ENCODE measurements at regions of chr1 and their contacts with region 1.

Region 1: GRCh38 chr1:119266386-119266785 is 102.2 kb upstream of the HAO2 start:
- DNase-seq: peak; percentile 70
- ATAC-seq: peak; percentile 95
- H3K4me3 ChIP-seq: no peak overlapping the region
- H3K27ac ChIP-seq: 0 out of 2 replicates have a peak overlapping the region, but pooled peaks have one; percentile 24
- H3K4me1 ChIP-seq: peaks cover 14% of the 10 kb centered on the region
- H3K27me3 ChIP-seq: no peaks in the 10 kb centered on the region
- CTCF ChIP-seq: no peak
- EP300 ChIP-seq: no peak
- POLR2A ChIP-seq: no peak
- RAD21 ChIP-seq: no peak

Region 2: DNA sequence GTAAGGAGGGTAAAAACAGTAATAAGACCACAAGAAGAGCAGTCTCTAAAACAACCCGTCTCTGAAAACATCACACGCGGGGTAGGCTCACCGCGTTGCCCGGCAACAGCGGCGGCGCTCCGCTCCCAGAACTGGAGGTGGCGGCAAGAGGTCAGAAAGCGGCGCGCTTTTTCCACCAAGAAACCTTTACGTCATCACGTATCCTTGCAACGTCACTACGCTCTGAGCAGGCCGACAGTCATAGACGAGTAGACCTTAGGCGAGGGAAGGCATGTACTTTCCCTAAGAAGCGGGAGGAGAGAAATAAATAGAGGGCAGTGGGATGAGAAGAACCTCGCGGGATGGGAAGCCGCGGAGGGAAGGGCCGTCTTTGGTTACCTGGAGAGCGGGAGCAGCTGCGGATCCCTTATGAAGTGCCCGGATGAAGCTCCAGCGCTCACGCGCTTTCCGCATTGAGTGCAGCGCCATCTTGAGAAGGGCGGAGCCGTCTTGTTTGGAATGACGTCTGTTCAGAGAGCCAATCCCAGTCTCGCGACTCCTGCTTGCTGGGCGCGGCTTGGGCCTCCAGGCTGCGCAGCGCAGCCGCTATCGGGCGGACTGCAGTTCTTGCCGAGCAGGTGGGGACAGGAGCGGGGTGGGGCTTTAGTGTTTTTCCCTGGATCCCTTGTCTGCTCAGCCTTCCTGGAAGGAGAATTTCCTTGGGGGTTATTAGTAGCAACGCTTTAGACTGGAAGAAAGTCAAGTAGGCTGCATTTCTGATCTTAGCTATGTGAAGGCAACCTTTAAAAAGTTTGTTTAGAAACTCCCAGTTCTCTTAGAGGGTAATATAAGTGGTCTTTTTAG is 126.0 kb before region 1 on chr1 and contains the start of gene WARS2:
- CTCF ChIA-PET with region 1: interaction called, 7 read pairs
- POLR2A ChIA-PET with region 1: no interaction called
- RAD21 ChIA-PET with region 1: interaction called, 8 read pairs
- SMC1A ChIA-PET with region 1: interaction called, 4 read pairs
- in situ Hi-C with region 1: no loop called
- intact Hi-C with region 1: loop called (anchors 10 kb)
- DNase-seq: peak; percentile 93
- ATAC-seq: peak; percentile 96
- H3K4me3 ChIP-seq: peak within 1 kb of the TSS; percentile 74
- H3K27ac ChIP-seq: peak within 1 kb of the TSS; percentile 99
- H3K4me1 ChIP-seq: no peaks in the 10 kb centered on the region
- H3K27me3 ChIP-seq: no peaks in the 10 kb centered on the region
- CTCF ChIP-seq: peak in 2 of 3 experiments; percentile 1 to 30; a peak in 2 of 6 replicates
- EP300 ChIP-seq: peak in 1 of 2 experiments; percentile 12; a peak in 1 of 4 replicates
- POLR2A ChIP-seq: peak; percentile 92
- RAD21 ChIP-seq: no peak
- polyA plus RNA-seq, gene WARS2: 5.5 to 5.9 TPM

Region 3: DNA sequence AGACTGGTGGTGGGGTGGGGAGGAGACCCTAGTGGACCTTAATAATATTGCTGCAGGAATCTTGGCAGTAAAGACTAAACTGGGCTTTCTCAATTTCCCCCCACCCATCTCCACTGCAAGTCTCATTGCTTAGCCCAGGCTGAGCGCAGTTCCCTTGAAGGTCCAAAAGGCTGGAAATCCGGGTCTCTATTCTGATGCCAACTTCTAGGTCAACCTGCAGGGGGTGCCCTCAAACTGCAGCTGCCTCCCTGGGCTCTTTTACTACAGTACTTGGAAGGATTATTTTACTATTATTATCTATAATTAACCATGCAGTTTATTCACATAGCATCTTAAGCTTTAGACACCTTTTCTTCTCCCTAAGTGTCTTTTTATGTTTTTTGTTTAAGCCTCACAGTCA is 40.6 kb before region 1 on chr1:
- CTCF ChIA-PET with region 1: interaction called, 96 read pairs
- POLR2A ChIA-PET with region 1: no interaction called
- RAD21 ChIA-PET with region 1: no interaction called
- SMC1A ChIA-PET with region 1: interaction called, 4 read pairs
- in situ Hi-C with region 1: no loop called
- intact Hi-C with region 1: loop called (anchors 2 kb)
- DNase-seq: no peak
- ATAC-seq: no peak
- H3K4me3 ChIP-seq: no peak overlapping the region
- H3K27ac ChIP-seq: no peak overlapping the region
- H3K4me1 ChIP-seq: peaks cover 4% of the 10 kb centered on the region; the same call in 1 of the 2 replicates
- H3K27me3 ChIP-seq: no peaks in the 10 kb centered on the region
- CTCF ChIP-seq: peak; percentile 6 to 26 (median 19); a peak in 3 of 6 replicates
- EP300 ChIP-seq: no peak
- POLR2A ChIP-seq: no peak
- RAD21 ChIP-seq: peak; percentile 16; the same call in 1 of the 2 replicates

Region 4: GRCh38 chr1:119330466-119331189 is 64.2 kb after region 1 on chr1:
- CTCF ChIA-PET with region 1: no interaction called
- POLR2A ChIA-PET with region 1: no interaction called
- RAD21 ChIA-PET with region 1: no interaction called
- SMC1A ChIA-PET with region 1: no interaction called
- in situ Hi-C with region 1: no loop called
- intact Hi-C with region 1: no loop called
- DNase-seq: no peak
- ATAC-seq: no peak
- H3K4me3 ChIP-seq: no peak overlapping the region
- H3K27ac ChIP-seq: no peak overlapping the region
- H3K4me1 ChIP-seq: peaks cover 7% of the 10 kb centered on the region
- H3K27me3 ChIP-seq: no peaks in the 10 kb centered on the region
- CTCF ChIP-seq: no peak
- EP300 ChIP-seq: no peak
- POLR2A ChIP-seq: no peak
- RAD21 ChIP-seq: no peak